Right ventricle myocardium inferior (tissue), 1 donor: ENCODE measurements at regions of chr20 and their contacts with region 1.

Region 1: GRCh38 chr20:57440678-57441520 is 49.7 kb downstream of the RBM38 start:
- DNase-seq: peak; percentile 94
- ATAC-seq: peak; percentile 89

Region 2: GRCh38 chr20:57398231-57398821 is 42.6 kb before region 1 on chr20:
- intact Hi-C with region 1: loop called (anchors 2 kb)
- DNase-seq: peak; percentile 80
- ATAC-seq: no peak

Region 3: GRCh38 chr20:57469418-57470211 is 28.7 kb after region 1 on chr20:
- intact Hi-C with region 1: loop called (anchors 2 kb)
- DNase-seq: no peak
- ATAC-seq: peak; percentile 84